ENCODE measurements at regions of chr2 and their contacts with region 1.

Region 1: DNA sequence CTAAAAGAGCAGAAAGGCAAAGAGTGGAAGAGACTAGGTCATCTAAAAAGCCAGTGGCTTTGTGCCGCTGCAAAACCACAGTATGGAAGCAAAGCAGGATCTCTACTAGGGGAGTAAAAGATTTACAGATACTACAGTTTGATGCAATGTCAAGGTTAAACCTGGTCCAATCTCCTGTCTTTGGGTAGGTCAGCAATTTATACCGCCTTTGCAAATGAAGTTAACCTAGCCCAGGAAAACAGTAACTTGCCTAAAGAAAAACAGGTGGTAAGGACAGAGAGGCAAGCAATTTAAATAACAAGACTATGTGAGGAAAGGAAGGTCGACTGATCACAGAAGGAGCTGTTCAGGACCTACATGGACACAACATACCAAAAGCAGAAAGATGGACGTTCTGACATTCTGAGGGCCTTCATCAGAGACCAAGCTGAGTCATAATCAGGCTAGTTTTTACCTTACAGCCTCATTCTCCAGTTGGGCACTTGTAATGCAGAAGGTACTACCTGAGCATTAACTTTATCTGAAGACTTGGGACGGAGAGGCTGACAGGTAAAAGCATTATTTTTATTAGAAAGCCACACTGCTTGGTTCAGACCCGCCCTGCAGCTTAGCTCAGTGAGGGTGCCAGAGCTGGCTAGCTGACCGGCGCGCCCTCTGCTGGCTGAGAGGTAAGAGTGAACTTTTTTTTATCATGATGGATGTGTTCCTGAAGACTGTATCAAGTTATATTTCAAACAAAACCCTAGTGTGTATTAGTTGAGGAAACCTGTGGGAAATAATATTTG is 15.9 kb downstream of the CDKL4 start:
- ATAC-seq: peak; percentile 73 to 92 (median 86)
- H3K4me3 ChIP-seq: peak overlapping the region in 1 of 5 donors; percentile 8
- H3K27ac ChIP-seq: no peak overlapping the region
- H3K4me1 ChIP-seq: no peaks in the 10 kb centered on the region

Region 2: DNA sequence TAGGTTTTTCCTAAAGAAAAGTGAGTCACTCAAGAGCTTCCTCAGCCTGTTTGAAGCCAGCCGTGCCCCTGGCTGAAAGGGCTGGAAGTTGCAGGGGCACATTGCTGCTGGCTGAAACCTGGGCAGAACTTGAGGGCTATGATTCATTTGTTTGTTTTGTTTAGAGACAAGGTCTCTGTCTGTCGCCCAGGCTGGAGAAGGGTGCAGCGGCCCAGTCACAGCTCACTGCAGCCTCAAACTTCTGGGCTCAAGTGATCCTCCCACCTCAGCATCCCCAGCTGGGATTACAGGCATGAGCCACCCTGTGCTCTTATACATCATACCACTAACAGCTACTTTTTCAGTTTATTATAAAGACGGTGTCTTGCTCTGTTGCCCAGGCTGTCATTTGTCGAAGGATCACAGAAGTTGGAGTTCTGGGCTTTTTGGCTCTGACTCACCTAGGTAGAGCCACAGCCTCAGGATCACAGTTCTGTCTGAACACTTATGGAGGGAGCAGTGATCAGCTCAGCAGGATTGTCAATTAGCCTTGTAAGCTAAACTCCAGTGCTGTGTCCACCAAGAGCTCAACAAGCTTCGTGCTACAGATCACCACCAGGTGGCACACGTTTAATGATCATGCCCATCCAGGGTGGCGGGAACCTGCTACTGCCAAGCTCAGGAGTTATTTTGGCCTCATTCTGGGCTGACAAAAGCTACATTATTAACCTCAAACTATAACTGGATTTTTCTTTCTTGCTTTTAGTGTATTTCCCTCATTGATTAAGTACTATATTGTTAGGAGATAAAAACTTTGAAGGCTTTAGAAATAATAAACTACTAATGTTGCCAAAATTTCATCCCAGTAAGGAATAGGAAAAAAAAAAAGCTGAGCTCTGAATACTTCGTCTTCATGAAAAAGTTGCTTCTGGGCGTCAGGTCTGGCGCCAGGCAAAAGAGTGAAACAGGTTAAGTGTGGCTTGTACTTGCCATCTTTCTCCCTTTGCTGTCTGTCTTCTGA is 280.3 kb before region 1 on chr2:
- in situ Hi-C with region 1: loop called in 1 of 9 experiments (anchors 25 kb)
- ATAC-seq: peak in 7 of 8 experiments; percentile 33 to 98 (median 65)
- H3K4me3 ChIP-seq: no peak overlapping the region
- H3K27ac ChIP-seq: no peak overlapping the region
- H3K4me1 ChIP-seq: no peaks in the 10 kb centered on the region

Region 3: DNA sequence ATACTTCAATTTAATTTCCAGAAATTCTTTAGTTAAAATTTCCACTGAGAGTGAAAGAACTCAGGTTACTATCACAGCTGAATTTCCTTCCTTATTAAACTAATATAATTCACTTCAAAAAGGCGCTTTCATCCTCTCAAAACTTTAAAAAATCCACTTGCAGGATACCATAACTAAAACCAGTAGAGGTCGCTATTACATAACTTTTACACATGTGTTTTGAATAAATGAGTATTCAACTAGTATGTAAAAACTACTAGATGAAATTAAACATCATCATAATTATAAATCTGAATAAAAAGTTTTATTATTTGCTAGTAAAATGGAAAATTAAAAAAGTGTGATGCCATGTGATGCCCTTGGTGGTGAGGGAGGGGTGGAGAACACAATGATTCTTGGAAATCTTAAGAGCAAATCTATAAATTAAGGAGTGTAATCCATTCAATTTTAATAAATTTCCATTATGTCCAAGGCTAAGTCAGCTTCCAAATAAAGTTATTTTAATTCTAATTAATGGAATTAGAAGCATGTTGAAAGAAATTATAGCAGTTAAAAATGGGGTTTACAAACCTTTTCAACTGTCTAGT is 168.4 kb before region 1 on chr2:
- in situ Hi-C with region 1: loop called in 7 of 9 experiments (anchors 10 to 25 kb)
- ATAC-seq: peak in 2 of 8 experiments; percentile 48 to 65
- H3K4me3 ChIP-seq: no peak overlapping the region
- H3K27ac ChIP-seq: no peak overlapping the region
- H3K4me1 ChIP-seq: no peaks in the 10 kb centered on the region

Region 4: DNA sequence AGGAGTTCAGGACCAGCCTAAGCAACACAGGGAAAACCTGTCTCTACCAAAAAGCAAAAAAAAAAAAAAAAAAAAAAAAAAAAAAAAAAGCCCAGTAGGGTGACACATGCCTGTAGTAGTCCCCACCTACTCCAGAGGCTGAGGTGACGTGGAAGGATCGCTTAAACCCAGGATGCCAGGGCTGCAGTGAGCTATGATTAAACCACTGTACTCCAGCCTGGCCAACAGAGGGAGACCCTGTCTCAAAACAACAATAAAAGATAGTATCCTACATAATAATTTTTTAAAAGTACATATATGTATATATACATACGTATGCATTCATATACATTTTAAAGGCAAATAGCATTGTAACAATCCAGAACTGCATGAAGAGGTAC is 158.7 kb before region 1 on chr2:
- in situ Hi-C with region 1: loop called in 7 of 9 experiments (anchors 10 to 25 kb)
- ATAC-seq: peak in 4 of 8 experiments; percentile 28 to 69 (median 34)
- H3K4me3 ChIP-seq: no peak overlapping the region
- H3K27ac ChIP-seq: no peak overlapping the region
- H3K4me1 ChIP-seq: peaks cover 3 to 4% of the 10 kb centered on the region in 2 donors

Region 5: DNA sequence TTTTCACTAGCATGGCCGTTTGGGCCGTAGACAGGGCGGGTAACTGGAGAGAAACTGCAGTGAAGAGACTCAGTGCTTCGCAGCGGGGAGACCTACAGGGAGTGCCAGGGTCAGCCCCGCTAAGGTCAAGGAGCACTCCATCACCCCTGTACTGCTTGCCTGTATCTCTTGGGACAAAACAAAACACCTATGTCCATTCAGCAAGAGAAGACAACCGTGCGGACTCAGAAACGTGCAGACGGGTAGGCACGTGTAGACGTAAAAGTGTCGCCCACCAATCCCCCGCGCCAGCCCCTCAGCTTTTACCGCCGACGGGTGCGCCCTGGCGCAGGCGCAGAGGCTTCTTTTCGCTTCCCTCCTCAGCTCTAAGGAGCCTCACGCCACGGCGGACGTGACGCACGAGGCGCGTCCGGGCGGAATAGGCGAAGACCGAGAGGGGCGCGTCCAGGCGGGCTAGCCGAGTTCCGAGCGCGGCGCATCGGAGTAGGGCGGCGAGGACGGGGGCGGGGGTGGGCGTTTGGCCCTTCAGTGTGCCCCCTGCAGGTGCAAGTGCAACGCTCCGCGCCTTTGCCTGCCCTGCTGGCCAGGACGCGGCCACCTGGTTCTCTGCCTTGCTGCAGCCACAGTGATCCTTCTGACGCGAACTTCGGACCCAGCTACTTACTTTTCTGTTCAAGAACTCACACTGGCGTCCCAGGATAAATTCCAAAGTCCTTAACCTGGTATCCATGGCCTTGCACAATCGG is 103.6 kb before region 1 on chr2:
- in situ Hi-C with region 1: loop called in 2 of 9 experiments (anchors 10 to 25 kb)
- ATAC-seq: peak; percentile 63 to 86 (median 81)
- H3K4me3 ChIP-seq: peak overlapping the region; percentile 46 to 59 (median 52)
- H3K27ac ChIP-seq: peak overlapping the region; percentile 84 to 88
- H3K4me1 ChIP-seq: peaks cover 16 to 18% of the 10 kb centered on the region in 2 donors

Region 6: DNA sequence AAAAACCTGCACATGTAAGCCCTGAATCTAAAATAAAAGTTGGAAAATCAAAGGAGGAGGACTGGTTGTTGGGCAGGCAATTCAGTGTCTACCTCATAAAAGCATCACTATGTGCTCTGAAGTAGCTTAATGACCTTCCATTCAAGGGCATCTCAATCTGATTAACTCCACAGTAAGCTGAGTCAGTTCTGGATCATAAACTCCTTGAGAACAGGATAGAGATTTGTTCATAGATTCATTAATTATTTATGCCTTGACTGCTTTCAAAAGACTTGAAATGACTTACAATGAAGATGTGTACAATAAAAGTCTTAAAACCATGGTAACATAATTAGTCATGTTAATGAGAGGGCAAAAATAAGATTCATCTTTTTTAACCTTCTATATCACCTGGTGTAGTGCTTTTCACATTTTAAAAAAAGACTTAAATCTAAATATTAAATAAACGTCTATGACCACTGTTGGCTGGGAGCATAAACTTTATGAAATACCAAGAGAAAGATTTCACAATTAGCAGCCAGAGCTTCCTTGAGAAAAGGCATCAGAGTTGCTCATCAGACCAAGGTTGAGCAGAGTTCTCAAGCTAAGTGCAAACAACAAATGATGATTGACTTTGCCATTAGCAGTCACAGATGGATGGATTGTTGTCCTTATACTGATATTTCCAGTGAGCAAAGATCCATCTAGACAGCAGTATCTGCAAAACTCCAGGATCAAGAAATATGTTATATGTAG is 788.5 kb after region 1 on chr2:
- in situ Hi-C with region 1: no loop called
- ATAC-seq: no peak
- H3K4me3 ChIP-seq: no peak overlapping the region
- H3K27ac ChIP-seq: no peak overlapping the region
- H3K4me1 ChIP-seq: no peaks in the 10 kb centered on the region

Measured in motor neuron (in vitro differentiated cells).